ENCODE measurements at regions of chr9 and their contacts with region 1.

Region 1: DNA sequence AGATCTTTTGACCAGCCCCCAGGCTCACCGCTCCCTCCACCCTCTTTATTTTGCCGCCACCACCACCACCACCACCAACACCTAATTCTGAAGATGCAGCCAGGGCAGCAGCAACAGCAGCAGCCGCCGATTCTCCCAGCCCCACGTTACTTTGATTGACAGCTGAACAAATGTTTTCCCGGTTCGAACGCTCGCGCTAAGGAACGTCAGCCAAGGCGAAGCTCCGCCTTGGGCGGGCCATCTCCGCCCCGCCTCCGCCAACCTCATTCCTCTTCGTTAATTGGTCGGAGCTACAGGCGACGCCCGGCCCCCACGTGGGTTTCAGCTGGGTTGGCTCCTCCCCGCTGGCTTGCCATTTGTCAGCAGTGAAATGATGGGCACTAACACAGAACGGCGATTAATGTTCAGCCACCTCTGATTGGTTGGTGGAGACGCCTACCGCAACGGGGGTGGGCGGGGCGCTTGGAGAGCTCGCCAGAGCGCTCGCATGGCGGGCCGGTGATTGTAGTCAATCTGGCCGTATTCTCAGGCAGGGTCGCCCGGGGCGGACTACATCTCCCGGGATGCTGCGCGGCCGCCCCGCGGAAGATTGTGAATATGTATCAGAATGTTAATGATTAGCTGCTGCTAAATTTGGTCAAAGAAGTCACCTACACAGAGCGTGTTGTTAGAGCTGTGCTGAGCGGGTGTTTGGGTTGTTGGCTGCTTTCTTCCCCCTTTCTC is at the start of gene TLE4:
- DNase-seq: peak; percentile 97
- ATAC-seq: peak; percentile 88
- H3K4me3 ChIP-seq: peak within 1 kb of the TSS; percentile 80
- H3K27ac ChIP-seq: peak within 1 kb of the TSS; percentile 22
- H3K4me1 ChIP-seq: peaks cover 12% of the 10 kb centered on the region; the same call in 1 of the 2 replicates
- H3K27me3 ChIP-seq: no peaks in the 10 kb centered on the region
- CTCF ChIP-seq: no peak
- total RNA-seq, gene TLE4: 8.3 and 17.9 TPM in 2 replicates

Region 2: DNA sequence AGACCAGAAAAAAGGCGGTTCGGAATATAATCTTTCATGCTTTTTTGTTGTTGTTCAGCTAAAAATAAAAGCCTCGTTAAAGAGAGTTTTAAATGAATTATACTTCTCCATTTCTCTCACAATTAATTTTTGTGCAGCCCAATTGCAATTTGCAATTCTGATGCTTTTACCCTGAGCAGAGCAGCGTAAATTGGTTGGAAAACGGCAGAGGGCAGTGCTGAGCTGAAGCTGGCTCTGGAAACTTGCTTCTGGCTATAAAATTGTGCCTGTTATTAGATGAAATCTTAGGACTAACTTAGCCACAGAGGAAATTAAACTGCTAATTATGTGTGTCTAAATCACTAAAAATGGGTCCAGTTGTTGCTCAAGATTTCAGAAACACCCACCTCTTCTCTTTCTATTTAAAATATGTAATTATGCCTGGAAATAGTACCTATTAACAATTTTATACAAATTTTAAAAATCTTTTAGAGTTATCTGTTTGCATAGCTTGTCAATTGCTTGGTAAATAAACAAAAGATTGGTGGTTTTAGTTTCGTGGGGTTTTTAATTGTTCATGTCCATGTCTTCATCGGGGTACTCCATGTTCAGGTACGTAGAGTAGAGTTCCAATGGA is 441.5 kb before region 1 on chr9:
- CTCF ChIA-PET with region 1: no interaction called
- POLR2A ChIA-PET with region 1: no interaction called
- intact Hi-C with region 1: loop called (anchors 2 kb)
- DNase-seq: peak; percentile 66
- ATAC-seq: peak; percentile 63; the same call in 1 of the 2 replicates
- H3K4me3 ChIP-seq: no peak overlapping the region
- H3K27ac ChIP-seq: no peak overlapping the region
- H3K4me1 ChIP-seq: peaks cover 9% of the 10 kb centered on the region; the same call in 1 of the 2 replicates
- H3K27me3 ChIP-seq: no peaks in the 10 kb centered on the region
- CTCF ChIP-seq: peak; percentile 80

Region 3: GRCh38 chr9:79623799-79624721 is 52.6 kb after region 1 on chr9:
- CTCF ChIA-PET with region 1: interaction called, 4 read pairs
- POLR2A ChIA-PET with region 1: no interaction called
- intact Hi-C with region 1: loop called (anchors 5 kb)
- DNase-seq: peak; percentile 69
- ATAC-seq: peak; percentile 87
- H3K4me3 ChIP-seq: no peak overlapping the region
- H3K27ac ChIP-seq: peak overlapping the region; percentile 82
- H3K4me1 ChIP-seq: peaks cover 24% of the 10 kb centered on the region
- H3K27me3 ChIP-seq: no peaks in the 10 kb centered on the region
- CTCF ChIP-seq: no peak

Region 4: GRCh38 chr9:79686381-79687130 is 115.1 kb after region 1 on chr9:
- CTCF ChIA-PET with region 1: no interaction called
- POLR2A ChIA-PET with region 1: no interaction called
- intact Hi-C with region 1: no loop called
- DNase-seq: peak; percentile 35
- ATAC-seq: no peak
- H3K4me3 ChIP-seq: no peak overlapping the region
- H3K27ac ChIP-seq: no peak overlapping the region
- H3K4me1 ChIP-seq: no peaks in the 10 kb centered on the region; the same call in 1 of the 2 replicates
- H3K27me3 ChIP-seq: no peaks in the 10 kb centered on the region
- CTCF ChIP-seq: no peak

Region 5: DNA sequence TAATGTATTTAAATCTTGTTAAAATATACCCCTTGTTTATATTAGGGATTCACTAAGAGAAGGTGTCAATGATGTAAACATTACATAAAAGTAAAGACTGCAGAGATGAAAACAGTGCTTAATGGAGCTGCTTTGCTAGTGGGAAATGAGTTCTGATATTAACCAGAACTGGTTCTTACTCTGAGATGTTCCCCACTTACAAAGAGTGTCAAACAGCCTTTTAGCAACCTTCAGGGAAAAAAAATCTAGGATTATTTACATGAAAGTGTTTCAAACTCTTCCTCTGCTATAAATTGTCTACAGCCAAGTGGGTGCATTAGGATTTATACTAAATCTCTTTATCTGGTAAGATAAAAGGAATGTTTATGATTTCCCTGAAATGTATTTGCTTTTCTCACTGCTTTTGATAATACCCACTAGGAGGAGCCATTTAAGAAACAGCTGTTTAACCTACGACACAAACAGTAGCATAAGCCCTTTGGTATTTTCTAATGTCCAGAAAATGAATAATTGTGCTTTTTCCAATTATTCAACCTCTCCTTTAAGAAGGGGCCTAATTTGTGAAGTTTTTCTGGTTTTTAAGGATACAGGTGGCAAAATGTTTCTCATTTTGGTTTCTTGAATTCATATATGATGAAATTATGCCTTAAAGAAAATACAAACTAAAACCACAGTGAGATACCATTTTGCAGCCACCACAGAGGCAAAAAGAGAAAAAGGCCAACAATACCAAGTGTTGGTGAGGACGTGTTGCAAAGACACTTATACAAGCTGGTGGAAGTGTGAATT is 186.6 kb after region 1 on chr9:
- CTCF ChIA-PET with region 1: no interaction called
- POLR2A ChIA-PET with region 1: no interaction called
- intact Hi-C with region 1: loop called (anchors 5 kb)
- DNase-seq: peak; percentile 31
- ATAC-seq: peak; percentile 31; the same call in 1 of the 2 replicates
- H3K4me3 ChIP-seq: no peak overlapping the region
- H3K27ac ChIP-seq: no peak overlapping the region
- H3K4me1 ChIP-seq: peaks cover 4% of the 10 kb centered on the region; the same call in 1 of the 2 replicates
- H3K27me3 ChIP-seq: no peaks in the 10 kb centered on the region
- CTCF ChIP-seq: peak; percentile 64

Region 6: GRCh38 chr9:79946712-79947111 is 375.2 kb after region 1 on chr9:
- CTCF ChIA-PET with region 1: no interaction called
- POLR2A ChIA-PET with region 1: no interaction called
- intact Hi-C with region 1: loop called (anchors 2 kb)
- DNase-seq: no peak
- ATAC-seq: no peak
- H3K4me3 ChIP-seq: no peak overlapping the region
- H3K27ac ChIP-seq: no peak overlapping the region
- H3K4me1 ChIP-seq: peaks cover 9% of the 10 kb centered on the region; the same call in 1 of the 2 replicates
- H3K27me3 ChIP-seq: no peaks in the 10 kb centered on the region
- CTCF ChIP-seq: no peak

Region 7: DNA sequence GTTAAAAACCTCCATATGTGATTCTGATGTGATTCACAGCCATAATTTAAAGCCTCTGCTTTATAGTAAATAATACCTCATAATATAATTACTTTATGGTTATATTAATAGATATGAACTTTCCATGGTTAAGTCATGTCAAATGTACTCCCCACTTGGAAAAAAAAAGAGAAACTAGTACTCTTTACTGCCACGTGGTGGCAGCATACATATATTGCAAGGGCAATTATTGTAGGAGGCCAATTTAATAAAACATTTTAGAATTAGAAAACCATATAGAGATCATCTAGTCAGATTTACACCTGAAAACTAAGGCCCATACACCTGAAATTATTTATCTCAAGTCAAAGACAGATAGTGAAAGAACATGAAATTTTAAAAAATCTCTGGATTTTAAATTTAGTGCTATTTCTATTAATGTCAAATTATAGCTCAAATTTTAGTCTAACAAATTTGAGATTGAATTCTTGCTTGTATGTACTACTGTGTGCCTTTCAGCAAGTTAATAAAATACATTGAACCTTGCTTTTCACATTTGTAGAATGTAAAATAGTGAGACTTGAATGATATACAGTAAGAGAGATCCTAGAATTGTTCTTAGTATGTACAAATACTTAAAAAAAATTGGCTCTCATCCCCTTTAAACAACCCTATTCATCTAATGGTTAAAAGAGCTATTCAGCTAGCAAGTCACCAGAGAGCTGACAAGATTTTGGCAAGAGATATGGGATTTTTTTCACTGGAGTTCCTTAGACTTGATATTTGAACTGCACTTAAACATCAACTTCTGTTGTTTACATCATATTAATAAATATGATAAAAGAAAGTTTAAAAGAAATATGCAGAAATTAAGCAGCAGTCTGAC is 604.0 kb after region 1 on chr9:
- CTCF ChIA-PET with region 1: no interaction called
- POLR2A ChIA-PET with region 1: no interaction called
- intact Hi-C with region 1: loop called (anchors 5 kb)
- DNase-seq: peak; percentile 63
- ATAC-seq: no peak
- H3K4me3 ChIP-seq: no peak overlapping the region
- H3K27ac ChIP-seq: no peak overlapping the region
- H3K4me1 ChIP-seq: no peaks in the 10 kb centered on the region
- H3K27me3 ChIP-seq: no peaks in the 10 kb centered on the region
- CTCF ChIP-seq: peak; percentile 69

Measured in PC-3 (cell line).